Vagina (tissue), 2 donors: ENCODE measurements at regions of chr4 and their contacts with region 1.

Region 1: DNA sequence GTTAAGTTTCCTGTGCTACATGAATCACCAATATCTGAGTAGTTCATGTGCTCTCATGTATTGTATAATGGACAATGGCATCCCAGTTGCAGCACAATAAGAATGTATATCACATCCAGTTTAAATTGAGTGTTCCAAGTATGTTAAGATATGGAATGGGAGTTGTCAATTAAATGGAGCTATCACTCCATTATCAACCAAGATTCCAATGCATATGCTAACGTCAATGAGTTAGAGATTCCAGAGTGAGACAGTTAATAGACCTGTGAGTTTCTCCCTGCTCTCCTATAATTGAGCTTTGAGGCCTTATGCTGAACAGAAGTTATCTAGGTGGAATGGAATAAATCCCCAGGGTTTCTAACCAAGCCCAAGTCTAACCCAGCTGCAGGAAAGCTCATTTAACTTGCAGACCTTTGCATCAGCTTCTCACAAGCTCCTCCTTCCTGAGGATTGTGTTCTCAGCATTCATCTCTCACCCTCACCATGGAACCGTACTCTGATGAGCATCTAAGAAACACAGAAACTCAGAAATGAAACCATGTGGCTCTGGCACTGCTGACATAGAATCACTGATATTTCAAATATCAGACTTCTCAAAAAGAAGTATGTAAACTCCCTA is 84.8 kb downstream of the TIGD2 start:
- DNase-seq: no peak
- H3K4me3 ChIP-seq: no peak overlapping the region
- H3K27ac ChIP-seq: no peak overlapping the region
- H3K4me1 ChIP-seq: no peaks in the 10 kb centered on the region
- H3K27me3 ChIP-seq: no peaks in the 10 kb centered on the region
- CTCF ChIP-seq: no peak
- POLR2A ChIP-seq: no peak

Region 2: GRCh38 chr4:88171206-88171605 is 1025.0 kb before region 1 on chr4:
- intact Hi-C with region 1: loop called (anchors 5 kb)
- DNase-seq: no peak
- H3K4me3 ChIP-seq: no peak overlapping the region
- H3K27ac ChIP-seq: no peak overlapping the region
- H3K4me1 ChIP-seq: no peaks in the 10 kb centered on the region
- H3K27me3 ChIP-seq: no peaks in the 10 kb centered on the region
- CTCF ChIP-seq: no peak
- POLR2A ChIP-seq: no peak